Right ventricle myocardium superior (tissue), 1 donor: ENCODE measurements at regions of chr13 and their contacts with region 1.

Region 1: DNA sequence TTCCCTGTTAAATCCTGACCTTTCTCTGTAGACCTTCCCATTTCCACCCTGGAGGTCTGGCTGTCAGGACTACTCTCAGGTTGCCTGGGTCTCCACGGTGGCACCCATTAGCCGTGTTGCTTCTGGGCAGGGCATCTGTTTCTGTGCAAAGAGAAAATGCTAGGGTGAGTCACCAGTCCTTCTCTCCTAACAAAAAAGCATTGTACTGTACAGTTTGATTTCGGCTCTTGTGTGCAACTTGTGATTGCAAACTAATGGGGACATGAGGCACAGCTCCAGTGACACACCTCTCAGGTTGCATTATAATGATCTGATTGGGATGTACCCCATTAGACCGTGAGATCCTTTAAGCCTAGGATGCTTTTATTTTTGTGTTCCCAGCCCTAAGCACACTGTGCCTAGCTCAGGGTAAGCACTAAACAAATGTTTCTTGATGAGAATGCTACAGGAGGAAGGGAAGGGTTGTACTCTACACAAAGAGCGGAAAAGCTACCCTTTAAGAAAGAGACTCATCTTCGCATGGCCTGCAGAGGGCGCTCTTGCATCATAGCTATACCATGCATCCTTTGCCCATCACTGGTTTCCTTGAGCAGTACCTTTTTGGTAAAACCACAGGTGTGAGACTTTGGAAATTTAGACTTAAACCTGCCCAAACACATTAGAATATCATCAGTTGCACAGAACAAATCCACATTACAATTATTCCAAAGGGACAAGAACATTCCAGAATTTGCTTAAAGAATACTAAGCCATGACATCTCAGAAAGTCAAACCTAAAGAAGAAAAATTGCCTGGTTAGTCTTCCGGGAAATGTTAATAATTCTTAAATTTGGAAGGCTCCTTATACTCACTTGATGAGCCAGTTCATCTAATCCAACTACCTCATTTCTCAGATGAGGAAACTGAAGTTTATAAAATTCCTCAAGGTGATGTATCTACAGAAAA is 20.3 kb upstream of the TRIM13 start:
- DNase-seq: peak; percentile 83
- ATAC-seq: peak; percentile 85

Region 2: GRCh38 chr13:50801087-50801931 is 824.7 kb after region 1 on chr13:
- intact Hi-C with region 1: loop called (anchors 5 kb)
- DNase-seq: peak; percentile 33
- ATAC-seq: peak; percentile 96

Region 3: GRCh38 chr13:50911937-50912795 is 935.6 kb after region 1 on chr13:
- intact Hi-C with region 1: loop called (anchors 5 kb)
- DNase-seq: peak; percentile 91
- ATAC-seq: peak; percentile 54

Region 4: GRCh38 chr13:51066091-51066831 is 1089.7 kb after region 1 on chr13:
- intact Hi-C with region 1: loop called (anchors 5 kb)
- DNase-seq: no peak
- ATAC-seq: no peak